ENCODE measurements at regions of chr15 and their contacts with region 1.

Region 1: DNA sequence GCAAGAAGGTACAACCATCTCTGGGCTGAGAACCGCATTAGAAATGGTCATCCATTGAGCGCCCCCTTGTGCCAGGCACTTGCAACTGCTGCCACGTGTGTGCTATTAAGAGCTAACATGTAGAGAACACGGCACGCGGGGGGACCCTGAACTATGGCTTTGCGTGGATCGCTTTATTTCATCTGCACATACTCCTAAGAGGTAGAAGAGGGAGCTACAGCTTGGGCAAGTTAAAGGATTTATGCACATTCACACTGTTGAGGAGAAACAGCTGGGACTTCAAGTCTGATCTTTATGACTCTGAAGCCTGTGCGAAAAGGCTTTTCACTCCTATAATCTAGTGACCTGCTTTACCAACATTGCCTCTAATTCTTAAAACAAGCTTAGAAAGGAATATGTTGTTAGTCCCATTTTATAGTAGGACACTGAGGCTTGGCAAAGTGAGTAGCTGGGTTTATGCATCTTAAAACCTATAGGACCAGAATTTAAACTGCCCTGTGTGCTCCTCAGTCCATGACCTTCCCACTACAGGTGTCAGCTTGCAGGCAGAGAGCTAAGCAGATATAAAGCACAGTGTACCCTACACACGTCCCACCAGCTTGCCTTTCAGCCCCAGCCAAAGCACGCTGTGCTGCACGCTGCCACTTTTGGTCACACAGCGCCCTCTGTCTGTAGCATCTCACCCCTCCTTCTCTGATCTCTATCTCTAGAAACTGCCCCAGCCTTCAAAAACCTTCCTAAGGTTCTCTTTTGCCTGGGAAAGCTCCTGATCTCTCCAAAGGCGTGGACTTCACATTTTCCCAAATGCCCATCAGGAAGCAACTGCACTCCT is 57.8 kb downstream of the STARD5 start:
- DNase-seq: peak; percentile 40 to 63
- ATAC-seq: peak; percentile 87 to 89
- H3K4me3 ChIP-seq: peak overlapping the region in 3 of 4 donors; percentile 1 to 29 (median 9)
- H3K27ac ChIP-seq: no peak overlapping the region
- H3K4me1 ChIP-seq: peaks cover 4 to 10% of the 10 kb centered on the region in 2 donors
- H3K27me3 ChIP-seq: no peaks in the 10 kb centered on the region
- CTCF ChIP-seq: peak; percentile 66 to 81 (median 75)
- POLR2A ChIP-seq: no peak

Region 2: GRCh38 chr15:80455668-80456442 is 810.3 kb before region 1 on chr15:
- in situ Hi-C with region 1: loop called in 2 of 4 experiments (anchors 25 kb)
- intact Hi-C with region 1: loop called (anchors 10 kb)
- DNase-seq: peak; percentile 21 to 24
- ATAC-seq: peak; percentile 33 to 81
- H3K4me3 ChIP-seq: no peak overlapping the region
- H3K27ac ChIP-seq: no peak overlapping the region
- H3K4me1 ChIP-seq: no peaks in the 10 kb centered on the region
- H3K27me3 ChIP-seq: no peaks in the 10 kb centered on the region
- CTCF ChIP-seq: peak; percentile 75 to 95 (median 83)
- POLR2A ChIP-seq: no peak

Region 3: DNA sequence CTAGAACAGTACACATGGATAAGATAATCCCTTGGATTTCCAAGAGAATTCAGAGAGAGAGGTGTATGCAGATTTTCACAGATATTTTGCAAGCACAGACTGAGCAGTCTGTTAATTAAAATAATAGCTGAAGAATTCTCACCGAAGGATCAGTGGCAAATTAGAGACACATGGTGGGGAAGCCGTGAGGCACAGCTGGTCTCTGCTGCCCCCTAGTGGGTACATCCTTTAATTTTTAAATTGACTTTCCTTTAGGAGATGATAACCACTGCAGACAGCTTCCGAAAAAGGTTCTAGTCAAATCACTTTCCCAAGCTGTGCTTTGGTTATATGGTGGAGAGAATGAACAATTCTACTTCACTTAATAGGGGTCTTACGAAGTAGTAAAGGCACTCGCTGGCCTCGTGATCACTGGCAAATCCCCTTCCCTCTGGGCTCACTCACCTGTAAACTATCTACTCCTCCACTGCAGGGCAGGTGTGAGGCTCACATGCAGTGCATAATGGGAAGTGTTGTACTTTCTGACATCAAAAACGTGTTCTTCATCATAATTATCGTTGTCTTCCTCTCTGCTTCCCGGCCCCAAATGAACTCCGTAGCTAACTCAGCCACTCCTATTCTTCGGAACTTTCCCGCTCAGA is 296.0 kb before region 1 on chr15:
- in situ Hi-C with region 1: loop called in 3 of 4 experiments (anchors 5 to 25 kb)
- intact Hi-C with region 1: loop called (anchors 5 kb)
- DNase-seq: peak in 1 of 2 donors; percentile 33
- ATAC-seq: peak in 1 of 2 donors; percentile 65
- H3K4me3 ChIP-seq: no peak overlapping the region
- H3K27ac ChIP-seq: no peak overlapping the region
- H3K4me1 ChIP-seq: no peaks in the 10 kb centered on the region
- H3K27me3 ChIP-seq: no peaks in the 10 kb centered on the region
- CTCF ChIP-seq: peak; percentile 72 to 90 (median 80)
- POLR2A ChIP-seq: no peak

Region 4: DNA sequence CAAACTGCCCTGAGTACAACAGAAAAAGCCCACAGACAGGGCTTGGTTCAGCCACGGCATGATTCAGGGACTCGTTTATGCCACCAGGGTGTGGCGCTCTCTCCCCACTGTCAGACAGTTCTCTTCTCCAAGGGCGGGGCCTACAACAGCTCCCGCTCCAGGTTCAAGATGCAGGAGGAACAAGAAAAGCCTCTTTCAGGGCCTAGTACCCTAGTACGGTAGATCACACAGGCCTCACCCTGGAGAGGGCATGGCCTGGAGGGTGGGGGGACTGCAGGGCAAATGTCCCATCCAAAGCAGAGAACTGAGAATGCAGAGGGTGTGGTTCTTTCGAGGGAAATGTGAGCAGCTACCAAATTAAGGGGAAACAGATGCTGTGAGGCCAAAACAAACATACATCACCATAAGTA is 288.5 kb before region 1 on chr15:
- in situ Hi-C with region 1: loop called in 3 of 4 experiments (anchors 5 to 25 kb)
- intact Hi-C with region 1: loop called (anchors 5 kb)
- DNase-seq: peak in 1 of 2 donors; percentile 33
- ATAC-seq: peak; percentile 53 to 65
- H3K4me3 ChIP-seq: no peak overlapping the region
- H3K27ac ChIP-seq: no peak overlapping the region
- H3K4me1 ChIP-seq: peaks cover 0 to 5% of the 10 kb centered on the region in 2 donors
- H3K27me3 ChIP-seq: no peaks in the 10 kb centered on the region
- CTCF ChIP-seq: peak in 4 of 5 experiments; percentile 31 to 54 (median 51)
- POLR2A ChIP-seq: no peak

Region 5: DNA sequence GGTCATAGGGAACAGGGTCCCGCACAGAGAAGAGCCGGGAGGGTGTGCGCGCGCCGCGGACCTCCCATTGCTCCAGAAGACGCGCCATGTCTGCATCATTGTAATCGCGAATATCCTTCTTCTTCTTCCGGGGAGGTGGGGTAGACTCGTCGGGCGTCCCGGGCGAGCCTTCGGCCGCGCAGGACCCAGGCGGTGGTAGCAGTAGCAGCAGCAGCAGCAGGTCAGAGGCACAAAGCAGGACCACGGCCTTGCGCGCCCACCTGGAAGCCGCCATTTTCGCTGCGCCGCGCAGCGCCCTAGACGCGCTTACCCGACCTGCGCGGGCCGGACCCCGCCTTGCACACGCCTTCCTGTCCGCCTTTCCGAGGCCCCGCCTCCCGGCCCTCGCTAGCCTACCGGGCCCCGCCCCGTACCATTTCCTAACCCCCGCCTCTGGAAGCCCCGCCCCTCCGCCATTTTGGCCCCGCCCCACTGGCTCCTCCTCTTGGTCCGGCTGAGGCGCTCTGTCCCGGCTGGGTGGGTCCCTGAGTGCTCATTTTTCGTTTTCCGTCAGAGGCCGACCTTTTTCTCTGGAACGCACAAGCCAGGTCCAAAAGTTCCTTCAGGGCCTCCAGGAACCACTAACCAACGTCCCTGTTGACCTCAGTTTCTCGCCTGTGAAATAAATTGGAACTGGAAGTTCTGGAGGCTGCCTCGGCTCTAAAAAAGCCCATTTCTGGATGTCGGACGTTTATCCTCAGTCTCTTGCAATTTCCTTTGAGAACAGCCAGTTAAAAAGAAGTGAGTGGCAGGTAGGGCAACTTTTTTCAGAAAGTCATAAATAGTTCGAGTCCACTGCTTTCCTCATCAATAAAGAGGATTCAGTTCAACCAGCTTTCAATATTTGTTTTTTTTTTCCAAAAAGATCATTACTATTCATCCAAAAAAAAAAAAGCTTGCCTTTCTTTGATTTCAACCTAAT is 276.4 kb before region 1 on chr15 and contains the start of gene MESD:
- in situ Hi-C with region 1: loop called in 2 of 4 experiments (anchors 10 to 25 kb)
- intact Hi-C with region 1: no loop called
- DNase-seq: peak; percentile 96
- ATAC-seq: peak; percentile 95
- H3K4me3 ChIP-seq: peak within 1 kb of the TSS; percentile 73 to 93 (median 91)
- H3K27ac ChIP-seq: peak within 1 kb of the TSS; percentile 87 to 91 (median 88)
- H3K4me1 ChIP-seq: peaks cover 26 to 37% of the 10 kb centered on the region in 2 donors
- H3K27me3 ChIP-seq: no peaks in the 10 kb centered on the region
- CTCF ChIP-seq: no peak
- POLR2A ChIP-seq: peak; percentile 82 to 85
- total RNA-seq, gene MESD: 5.5 to 7.9 (median 6.6) TPM

Region 6: DNA sequence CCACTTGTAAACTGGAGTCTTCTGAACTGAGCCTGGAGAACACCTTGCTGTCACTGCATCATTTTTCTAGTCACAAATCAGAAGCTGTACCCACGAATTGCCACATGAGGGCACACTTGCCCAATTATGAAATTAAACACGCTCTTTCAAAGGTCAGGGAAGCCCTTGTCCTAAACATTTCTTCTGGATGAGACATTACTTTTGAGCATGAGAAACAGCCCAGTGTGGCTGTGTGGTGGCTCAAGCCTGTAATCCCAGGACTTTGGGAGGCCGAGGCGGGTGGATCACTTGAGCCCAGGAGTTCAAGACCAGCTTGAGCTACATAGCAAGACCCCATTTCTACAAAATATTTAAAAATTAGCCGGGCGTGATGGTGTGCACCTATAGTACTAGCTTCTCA is 159.6 kb before region 1 on chr15:
- in situ Hi-C with region 1: loop called (anchors 5 kb)
- intact Hi-C with region 1: loop called (anchors 1 kb)
- DNase-seq: peak in 1 of 2 donors; percentile 20
- ATAC-seq: peak; percentile 78 to 79
- H3K4me3 ChIP-seq: no peak overlapping the region
- H3K27ac ChIP-seq: no peak overlapping the region
- H3K4me1 ChIP-seq: no peaks in the 10 kb centered on the region
- H3K27me3 ChIP-seq: no peaks in the 10 kb centered on the region
- CTCF ChIP-seq: peak; percentile 49 to 74 (median 71)
- POLR2A ChIP-seq: no peak

Region 7: GRCh38 chr15:81155375-81156218 is 110.6 kb before region 1 on chr15:
- in situ Hi-C with region 1: loop called in 2 of 4 experiments (anchors 5 kb)
- intact Hi-C with region 1: loop called (anchors 1 kb)
- DNase-seq: peak; percentile 41 to 56
- ATAC-seq: peak; percentile 63 to 92
- H3K4me3 ChIP-seq: no peak overlapping the region
- H3K27ac ChIP-seq: no peak overlapping the region
- H3K4me1 ChIP-seq: peaks cover 0 to 4% of the 10 kb centered on the region in 2 donors
- H3K27me3 ChIP-seq: no peaks in the 10 kb centered on the region
- CTCF ChIP-seq: peak; percentile 28 to 49 (median 43)
- POLR2A ChIP-seq: no peak

Region 8: DNA sequence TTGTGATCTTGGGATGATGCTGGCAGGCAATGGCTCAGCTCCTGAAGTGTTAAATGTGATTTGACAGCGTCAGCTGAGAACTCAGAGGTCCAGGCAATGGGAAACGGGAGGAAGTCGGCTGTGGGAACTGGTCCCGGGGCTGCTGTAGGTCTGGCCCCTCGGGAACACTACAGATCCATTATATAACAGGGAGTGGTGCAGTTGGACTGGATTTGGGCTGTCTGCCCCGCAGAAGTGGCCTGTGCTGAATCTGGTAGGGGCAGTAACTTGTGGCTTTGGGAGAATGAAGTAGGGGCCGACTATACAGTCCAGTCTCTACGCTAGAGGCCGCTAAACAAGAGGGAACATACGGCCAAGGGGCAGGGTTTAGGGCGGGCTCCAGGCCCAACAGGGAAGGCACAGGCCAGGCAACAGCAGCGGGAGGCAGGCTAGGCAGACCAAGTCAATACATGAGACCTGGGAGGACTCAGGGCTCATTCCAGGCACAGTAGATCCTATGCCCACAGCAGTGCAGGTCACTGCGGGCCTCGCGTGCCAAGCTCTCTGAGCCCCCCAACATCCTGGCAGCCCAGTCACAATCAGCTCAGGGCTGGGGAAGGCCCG is 89.8 kb before region 1 on chr15:
- in situ Hi-C with region 1: no loop called
- intact Hi-C with region 1: no loop called
- DNase-seq: peak in 1 of 2 donors; percentile 48
- ATAC-seq: peak; percentile 58 to 68
- H3K4me3 ChIP-seq: no peak overlapping the region
- H3K27ac ChIP-seq: peak overlapping the region; percentile 40 to 76 (median 54)
- H3K4me1 ChIP-seq: peaks cover 0 to 4% of the 10 kb centered on the region in 2 donors
- H3K27me3 ChIP-seq: peaks cover 0 to 1% (median 0%) of the 10 kb centered on the region in 3 donors
- CTCF ChIP-seq: no peak
- POLR2A ChIP-seq: no peak

Region 9: GRCh38 chr15:81480645-81481053 is 214.5 kb after region 1 on chr15:
- in situ Hi-C with region 1: no loop called
- intact Hi-C with region 1: no loop called
- DNase-seq: no peak
- ATAC-seq: peak; percentile 52 to 75
- H3K4me3 ChIP-seq: no peak overlapping the region
- H3K27ac ChIP-seq: no peak overlapping the region
- H3K4me1 ChIP-seq: no peaks in the 10 kb centered on the region
- H3K27me3 ChIP-seq: no peaks in the 10 kb centered on the region
- CTCF ChIP-seq: peak; percentile 69 to 85 (median 82)
- POLR2A ChIP-seq: no peak